ENCODE measurements at regions of chr7 and their contacts with region 1.

Region 1: DNA sequence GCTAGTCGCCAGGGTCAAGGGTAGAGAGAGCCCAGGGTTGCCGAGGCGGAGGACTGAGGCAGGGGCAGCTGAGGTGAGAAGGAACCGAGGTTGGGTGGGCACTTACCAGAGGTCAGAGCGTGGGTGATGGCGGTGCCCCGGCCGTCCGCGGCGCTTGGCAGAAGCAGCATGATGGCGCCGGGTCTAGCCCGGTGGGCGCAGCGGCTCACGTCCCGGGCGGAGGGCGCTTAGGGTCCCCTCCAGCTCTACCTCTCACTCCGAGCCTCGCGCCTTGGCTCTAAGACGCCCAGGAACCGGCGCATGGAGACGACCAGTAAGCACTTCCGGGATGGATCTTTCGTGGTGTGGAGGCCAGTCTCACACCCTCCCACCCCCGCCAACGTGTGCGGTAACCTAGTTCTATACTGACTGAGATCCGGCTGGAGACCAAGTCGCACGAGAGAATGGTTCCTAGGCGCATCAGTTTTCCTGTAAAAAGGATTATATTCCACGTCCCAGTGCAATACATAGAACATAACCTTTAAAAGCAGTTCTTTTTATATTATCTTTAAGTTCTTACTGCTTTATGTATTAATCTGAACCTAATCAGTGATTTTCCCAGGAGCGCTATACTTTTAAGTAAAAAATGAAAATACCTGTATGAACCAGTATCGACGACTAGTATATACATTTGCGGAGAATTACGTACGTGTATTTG is at the start of gene DNAJC2:
- DNase-seq: peak; percentile 90
- H3K4me3 Mint-ChIP-seq: peak within 1 kb of the TSS; percentile 90
- H3K27ac Mint-ChIP-seq: peak within 1 kb of the TSS; percentile 96
- H3K4me1 Mint-ChIP-seq: peaks cover 51% of the 10 kb centered on the region
- H3K27me3 Mint-ChIP-seq: no peaks in the 10 kb centered on the region
- total RNA-seq, gene DNAJC2: 51.1 to 51.5 TPM

Region 2: GRCh38 chr7:103148994-103149807 is 195.4 kb before region 1 on chr7 and contains the start of gene NAPEPLD:
- CTCF ChIA-PET with region 1: no interaction called
- POLR2A ChIA-PET with region 1: no interaction called
- intact Hi-C with region 1: loop called (anchors 2 kb)
- DNase-seq: peak; percentile 73
- H3K4me3 Mint-ChIP-seq: peak within 1 kb of the TSS; percentile 91
- H3K27ac Mint-ChIP-seq: peak within 1 kb of the TSS; percentile 92
- H3K4me1 Mint-ChIP-seq: peaks cover 36% of the 10 kb centered on the region
- H3K27me3 Mint-ChIP-seq: no peaks in the 10 kb centered on the region
- total RNA-seq, gene NAPEPLD: 8.4 to 9.3 TPM

Region 3: GRCh38 chr7:103296901-103297836 is 47.4 kb before region 1 on chr7 and contains the start of gene PMPCB:
- CTCF ChIA-PET with region 1: interaction called, 3 read pairs
- POLR2A ChIA-PET with region 1: no interaction called
- intact Hi-C with region 1: loop called (anchors 1 kb)
- DNase-seq: peak; percentile 98
- H3K4me3 Mint-ChIP-seq: peak within 1 kb of the TSS; percentile 80
- H3K27ac Mint-ChIP-seq: peak within 1 kb of the TSS; percentile 75
- H3K4me1 Mint-ChIP-seq: peaks cover 35% of the 10 kb centered on the region
- H3K27me3 Mint-ChIP-seq: no peaks in the 10 kb centered on the region
- total RNA-seq, gene PMPCB: 81.9 to 85.0 TPM

Region 4: DNA sequence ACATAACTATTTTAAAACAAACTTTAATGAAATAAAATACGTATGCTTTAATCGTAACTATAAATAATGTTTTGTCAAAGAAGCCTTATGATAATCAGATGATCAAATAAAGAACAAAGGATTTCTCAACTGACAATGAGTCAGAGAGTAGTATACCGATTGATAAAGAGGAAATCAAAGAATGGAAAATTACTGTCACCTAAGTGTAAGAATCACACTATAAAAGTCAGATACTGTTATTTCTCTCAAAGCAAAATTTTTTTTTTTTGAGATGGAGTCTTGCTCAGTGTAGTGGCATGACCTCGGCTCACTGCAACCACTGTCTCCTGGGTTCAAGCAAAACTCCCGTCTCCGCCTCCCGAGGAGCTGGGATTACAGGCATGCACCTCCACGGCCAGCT is 18.9 kb before region 1 on chr7:
- CTCF ChIA-PET with region 1: interaction called, 7 read pairs
- POLR2A ChIA-PET with region 1: no interaction called
- intact Hi-C with region 1: loop called (anchors 2 kb)
- DNase-seq: no peak
- H3K4me3 Mint-ChIP-seq: no peak overlapping the region
- H3K27ac Mint-ChIP-seq: peak overlapping the region; percentile 79
- H3K4me1 Mint-ChIP-seq: peaks cover 24% of the 10 kb centered on the region
- H3K27me3 Mint-ChIP-seq: no peaks in the 10 kb centered on the region

Region 5: DNA sequence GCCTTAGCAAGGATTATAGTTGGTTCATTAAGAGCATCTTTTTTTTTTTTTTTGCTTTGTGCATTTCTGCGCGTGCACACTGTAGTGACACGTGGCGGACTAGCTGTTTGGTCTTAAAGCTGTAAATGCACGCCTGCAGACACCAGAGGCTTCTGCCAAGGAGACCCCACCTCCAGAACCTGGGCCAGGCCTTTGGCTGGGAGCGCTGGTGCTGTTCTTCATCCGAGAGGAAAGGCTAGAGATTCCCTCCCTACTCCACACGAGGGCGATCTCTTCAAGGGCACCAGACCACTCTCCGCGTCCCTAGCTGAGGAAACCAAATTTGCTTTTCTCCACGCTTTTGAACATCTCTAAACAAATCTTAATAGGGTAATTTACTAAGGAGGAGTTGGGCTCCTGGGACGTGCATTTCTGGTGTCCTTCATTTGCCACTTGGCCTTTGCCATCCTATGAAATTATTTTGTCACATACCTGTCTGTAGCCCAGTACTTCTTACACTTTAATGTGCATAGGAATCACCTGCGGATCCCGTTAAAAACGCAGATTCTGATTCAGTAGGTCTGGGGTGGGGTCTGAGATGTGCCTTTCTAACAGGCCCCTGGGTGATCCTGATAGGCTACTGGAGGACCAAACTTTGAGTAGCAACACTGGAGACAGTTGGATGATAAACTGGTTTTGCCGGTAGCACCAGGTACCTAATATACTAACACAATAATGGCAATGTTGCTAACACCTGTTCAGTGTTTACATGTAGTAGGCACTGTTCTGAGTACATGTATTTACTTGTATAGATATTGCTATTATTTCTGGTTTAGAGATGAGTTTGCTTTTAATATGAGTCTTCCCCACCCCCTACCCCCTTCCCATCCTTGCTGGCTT is 102.7 kb after region 1 on chr7:
- CTCF ChIA-PET with region 1: no interaction called
- POLR2A ChIA-PET with region 1: no interaction called
- intact Hi-C with region 1: no loop called
- DNase-seq: peak; percentile 56
- H3K4me3 Mint-ChIP-seq: no peak overlapping the region
- H3K27ac Mint-ChIP-seq: no peak overlapping the region
- H3K4me1 Mint-ChIP-seq: peaks cover 9% of the 10 kb centered on the region
- H3K27me3 Mint-ChIP-seq: peaks cover 59% of the 10 kb centered on the region

Region 6: GRCh38 chr7:103499907-103500306 is 155.3 kb after region 1 on chr7:
- CTCF ChIA-PET with region 1: no interaction called
- POLR2A ChIA-PET with region 1: no interaction called
- intact Hi-C with region 1: no loop called
- DNase-seq: no peak
- H3K4me3 Mint-ChIP-seq: no peak overlapping the region
- H3K27ac Mint-ChIP-seq: no peak overlapping the region
- H3K4me1 Mint-ChIP-seq: no peaks in the 10 kb centered on the region
- H3K27me3 Mint-ChIP-seq: peaks cover 3% of the 10 kb centered on the region

Measured in activated CD4-positive, alpha-beta memory T cell treated with anti-CD3 and anti-CD28 coated beads for 36 hours (primary cell).